GM13976 (cell line): ENCODE measurements at regions of chr11 and their contacts with region 1.

Region 1: DNA sequence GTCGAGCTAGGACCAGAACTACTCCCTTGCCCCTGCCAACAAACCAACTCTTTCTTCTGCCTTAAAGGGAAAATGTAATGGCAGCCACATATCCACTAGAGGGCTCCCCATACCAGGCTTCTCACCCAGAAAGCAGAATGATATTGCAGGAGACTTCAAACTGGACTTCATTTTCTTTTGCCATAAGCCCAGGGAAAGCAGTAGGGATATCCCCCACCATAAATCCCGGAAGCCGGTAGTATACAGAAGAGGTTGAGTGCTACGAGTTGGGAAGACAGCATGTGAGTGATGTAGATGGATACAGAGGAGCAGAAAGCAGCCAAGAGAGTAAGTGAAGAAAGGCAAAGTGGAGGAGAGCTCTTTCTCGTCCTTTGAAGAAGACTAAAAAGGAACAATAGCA is 12.1 kb downstream of the PLAAT5 start:
- DNase-seq: peak; percentile 79
- CTCF ChIP-seq: peak; percentile 80

Region 2: GRCh38 chr11:63635762-63636465 is 157.0 kb after region 1 on chr11:
- in situ Hi-C with region 1: loop called (anchors 5 kb)
- DNase-seq: peak; percentile 78
- CTCF ChIP-seq: peak; percentile 59

Region 3: GRCh38 chr11:63738720-63739360 is 259.9 kb after region 1 on chr11:
- in situ Hi-C with region 1: loop called (anchors 10 kb)
- DNase-seq: peak; percentile 40
- CTCF ChIP-seq: peak; percentile 80